MCF 10A (cell line): ENCODE measurements at regions of chr18 and their contacts with region 1.

Region 1: DNA sequence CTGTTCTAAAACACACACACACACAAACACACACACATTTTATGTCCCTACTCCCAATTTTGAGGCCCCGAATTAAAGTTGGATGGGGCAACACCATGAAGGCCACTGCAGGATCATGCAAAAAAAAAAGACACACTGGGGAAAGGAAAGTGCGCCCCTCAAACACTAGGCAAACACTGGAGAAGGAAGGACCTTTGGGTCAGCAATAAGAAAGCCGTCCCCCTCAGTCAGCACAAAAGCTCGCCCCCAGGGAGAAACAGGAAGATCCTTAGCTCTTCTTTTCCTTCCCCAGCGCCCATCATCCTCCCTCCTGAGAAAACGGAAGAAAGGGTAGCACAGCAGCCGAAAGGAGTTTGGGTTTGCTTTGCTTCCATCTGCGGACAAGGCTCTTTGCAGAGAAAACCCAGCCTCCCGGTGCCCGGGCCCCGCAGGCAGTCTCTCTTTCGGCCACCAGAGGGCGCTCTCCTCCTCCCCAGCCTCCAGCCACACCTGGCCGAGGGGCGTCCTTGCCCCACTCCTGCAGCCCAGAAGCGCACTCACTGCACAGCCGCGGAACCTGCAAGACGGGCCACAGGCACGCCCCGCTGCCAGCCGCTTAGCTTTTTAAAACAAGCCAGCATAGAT is 248.5 kb downstream of the CDH20 start:
- DNase-seq: peak; percentile 60
- H3K4me3 Mint-ChIP-seq: peak overlapping the region; percentile 40
- H3K27ac Mint-ChIP-seq: no peak overlapping the region
- H3K4me1 Mint-ChIP-seq: peaks cover 25% of the 10 kb centered on the region
- H3K27me3 Mint-ChIP-seq: no peaks in the 10 kb centered on the region
- CTCF ChIP-seq: peak; percentile 97

Region 2: DNA sequence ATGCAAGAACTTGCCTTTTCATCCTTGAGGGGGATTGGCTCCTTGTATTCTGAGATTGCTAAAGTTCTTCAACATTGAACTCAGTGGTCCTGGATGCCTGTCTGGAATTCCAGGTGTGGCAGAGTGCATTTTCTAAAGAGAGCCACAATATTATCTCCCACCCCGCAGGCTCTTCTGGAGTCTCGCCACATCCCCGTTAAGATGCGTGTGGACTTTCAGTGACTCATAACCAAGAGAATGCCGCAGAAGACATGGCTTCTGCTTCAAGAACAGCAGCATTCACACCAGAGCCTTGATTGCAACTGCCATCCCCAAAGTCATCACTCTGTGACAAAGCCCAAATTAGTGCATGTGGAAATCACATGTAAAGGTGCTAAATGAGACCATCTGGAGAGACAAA is 105.8 kb before region 1 on chr18:
- CTCF ChIA-PET with region 1: no interaction called
- POLR2A ChIA-PET with region 1: no interaction called
- intact Hi-C with region 1: no loop called
- DNase-seq: peak; percentile 17
- H3K4me3 Mint-ChIP-seq: no peak overlapping the region
- H3K27ac Mint-ChIP-seq: no peak overlapping the region
- H3K4me1 Mint-ChIP-seq: no peaks in the 10 kb centered on the region
- H3K27me3 Mint-ChIP-seq: peaks cover 63% of the 10 kb centered on the region
- CTCF ChIP-seq: no peak

Region 3: DNA sequence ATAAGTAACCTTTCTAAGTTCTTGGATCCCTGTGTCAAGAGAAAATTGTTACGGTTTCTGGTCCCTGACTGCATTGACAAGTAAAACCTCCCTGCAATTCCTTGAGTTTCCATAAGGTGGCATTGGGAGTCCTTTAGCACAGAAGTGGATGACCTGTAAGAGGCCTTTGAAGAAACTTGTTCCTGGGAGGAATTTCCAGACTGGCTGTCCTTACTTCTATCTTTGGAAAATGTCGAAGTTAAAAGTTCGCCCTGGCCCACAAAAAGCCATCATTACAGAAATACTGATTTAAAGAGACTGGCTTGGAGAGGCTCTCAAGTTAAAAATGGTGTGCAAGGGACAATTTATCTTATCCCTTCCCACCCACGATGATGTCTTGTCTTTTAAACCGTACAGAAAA is 30.1 kb before region 1 on chr18:
- CTCF ChIA-PET with region 1: interaction called, 21 read pairs
- POLR2A ChIA-PET with region 1: no interaction called
- intact Hi-C with region 1: no loop called
- DNase-seq: peak; percentile 78
- H3K4me3 Mint-ChIP-seq: no peak overlapping the region
- H3K27ac Mint-ChIP-seq: no peak overlapping the region
- H3K4me1 Mint-ChIP-seq: no peaks in the 10 kb centered on the region
- H3K27me3 Mint-ChIP-seq: no peaks in the 10 kb centered on the region
- CTCF ChIP-seq: peak; percentile 81

Region 4: GRCh38 chr18:61600422-61600821 is 18.7 kb after region 1 on chr18:
- CTCF ChIA-PET with region 1: interaction called, 11 read pairs
- POLR2A ChIA-PET with region 1: no interaction called
- intact Hi-C with region 1: no loop called
- DNase-seq: no peak
- H3K4me3 Mint-ChIP-seq: no peak overlapping the region
- H3K27ac Mint-ChIP-seq: no peak overlapping the region
- H3K4me1 Mint-ChIP-seq: peaks cover 13% of the 10 kb centered on the region
- H3K27me3 Mint-ChIP-seq: no peaks in the 10 kb centered on the region
- CTCF ChIP-seq: no peak

Region 5: DNA sequence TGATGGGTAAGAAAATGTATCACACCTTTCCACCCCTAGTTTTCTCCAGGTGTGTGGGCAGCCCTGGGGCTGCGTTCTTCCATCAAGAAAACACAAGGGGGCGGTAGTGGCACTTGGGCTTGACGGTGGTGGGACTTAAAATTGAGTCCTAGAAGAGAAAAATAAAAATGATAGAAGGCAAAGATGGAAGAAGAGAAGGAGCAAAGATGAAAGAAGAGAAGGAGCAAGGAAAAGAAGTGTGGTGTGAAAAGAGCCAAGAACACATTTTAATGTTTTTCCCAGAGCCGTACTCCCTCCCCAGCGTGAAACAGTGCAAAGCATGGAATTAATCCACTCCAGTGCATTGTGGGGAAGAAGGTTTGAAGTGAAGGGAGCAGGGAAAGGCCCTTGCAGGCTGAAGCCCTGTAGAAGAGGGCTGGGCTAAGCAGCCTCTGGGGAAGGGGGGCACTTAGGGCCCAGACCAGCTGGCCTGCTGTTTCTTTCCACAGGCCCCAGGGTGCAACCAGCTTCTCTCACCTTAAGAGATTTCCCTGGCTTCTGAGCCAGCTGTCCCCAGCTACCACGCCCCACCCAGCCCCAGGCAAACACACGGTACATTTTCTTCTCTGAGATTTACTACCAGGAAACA is 54.3 kb after region 1 on chr18:
- CTCF ChIA-PET with region 1: interaction called, 12 read pairs
- POLR2A ChIA-PET with region 1: no interaction called
- intact Hi-C with region 1: no loop called
- DNase-seq: peak; percentile 61
- H3K4me3 Mint-ChIP-seq: peak overlapping the region; percentile 1
- H3K27ac Mint-ChIP-seq: peak overlapping the region; percentile 2
- H3K4me1 Mint-ChIP-seq: peaks cover 7% of the 10 kb centered on the region
- H3K27me3 Mint-ChIP-seq: no peaks in the 10 kb centered on the region
- CTCF ChIP-seq: peak; percentile 66

Region 6: DNA sequence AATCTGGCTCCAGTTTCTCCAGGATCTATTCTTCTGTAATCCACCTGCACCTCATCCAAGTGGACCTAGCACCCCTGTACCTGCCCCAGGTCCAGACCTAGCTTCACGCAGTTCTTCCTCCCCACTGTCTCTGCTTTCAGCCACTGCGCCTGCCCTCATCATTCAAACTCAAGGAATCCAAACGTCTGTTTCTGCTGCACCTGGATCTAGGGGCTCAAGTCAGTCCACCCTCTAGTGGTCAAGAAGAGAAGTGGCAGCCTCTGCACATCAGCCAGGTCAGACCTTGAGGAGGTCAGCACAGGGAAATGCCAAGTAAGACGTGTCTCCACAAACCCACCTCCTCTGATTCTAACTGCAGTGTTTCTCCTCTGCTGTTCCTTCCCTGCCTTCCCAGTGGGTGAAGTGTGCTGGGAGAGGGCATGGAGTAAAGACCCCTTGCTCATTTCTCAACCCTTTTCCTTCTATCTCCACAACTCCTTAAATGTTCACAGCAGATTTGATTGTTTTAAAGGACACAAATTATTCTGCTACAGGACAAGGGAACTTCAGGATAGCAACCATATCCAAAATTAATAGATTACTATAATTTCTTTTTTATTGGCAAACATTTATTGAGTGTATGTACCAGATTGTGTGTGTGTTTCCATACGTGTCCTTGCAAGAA is 319.8 kb after region 1 on chr18:
- CTCF ChIA-PET with region 1: interaction called, 50 read pairs
- POLR2A ChIA-PET with region 1: interaction called, 4 read pairs
- intact Hi-C with region 1: no loop called
- DNase-seq: peak; percentile 71
- H3K4me3 Mint-ChIP-seq: no peak overlapping the region
- H3K27ac Mint-ChIP-seq: no peak overlapping the region
- H3K4me1 Mint-ChIP-seq: peaks cover 17% of the 10 kb centered on the region
- H3K27me3 Mint-ChIP-seq: no peaks in the 10 kb centered on the region
- CTCF ChIP-seq: peak; percentile 93